ENCODE measurements at regions of chr7 and their contacts with region 1.

Region 1: DNA sequence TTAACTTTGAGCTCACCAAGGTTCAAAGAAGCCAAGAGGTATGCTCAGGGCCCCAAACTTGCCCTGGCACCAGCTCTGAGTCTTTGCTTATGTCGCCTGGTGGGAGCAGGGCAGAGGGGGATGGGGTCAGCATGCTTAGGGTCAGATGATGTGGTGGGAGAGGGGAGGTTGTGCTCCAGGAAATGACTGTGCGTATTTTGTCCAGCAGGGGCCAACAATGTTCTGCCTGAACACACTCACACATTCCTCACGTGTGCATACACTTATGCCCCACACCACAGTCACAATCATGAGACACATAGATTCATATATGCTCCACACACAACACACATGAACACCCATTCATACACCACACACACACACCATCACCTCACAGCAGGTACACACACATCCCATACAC is 4.4 kb upstream of the RAMP3 start:
- DNase-seq: no peak
- ATAC-seq: no peak
- H3K4me3 ChIP-seq: no peak overlapping the region
- H3K27ac ChIP-seq: no peak overlapping the region
- H3K4me1 ChIP-seq: peaks cover 0 to 3% of the 10 kb centered on the region in 2 donors
- H3K27me3 ChIP-seq: peaks cover 1 to 12% (median 7%) of the 10 kb centered on the region in 3 donors
- CTCF ChIP-seq: no peak
- POLR2A ChIP-seq: no peak

Region 2: GRCh38 chr7:45052011-45052410 is 101.2 kb before region 1 on chr7:
- in situ Hi-C with region 1: no loop called
- intact Hi-C with region 1: no loop called
- DNase-seq: no peak
- ATAC-seq: no peak
- H3K4me3 ChIP-seq: no peak overlapping the region
- H3K27ac ChIP-seq: no peak overlapping the region
- H3K4me1 ChIP-seq: no peaks in the 10 kb centered on the region
- H3K27me3 ChIP-seq: no peaks in the 10 kb centered on the region
- CTCF ChIP-seq: no peak
- POLR2A ChIP-seq: no peak

Region 3: DNA sequence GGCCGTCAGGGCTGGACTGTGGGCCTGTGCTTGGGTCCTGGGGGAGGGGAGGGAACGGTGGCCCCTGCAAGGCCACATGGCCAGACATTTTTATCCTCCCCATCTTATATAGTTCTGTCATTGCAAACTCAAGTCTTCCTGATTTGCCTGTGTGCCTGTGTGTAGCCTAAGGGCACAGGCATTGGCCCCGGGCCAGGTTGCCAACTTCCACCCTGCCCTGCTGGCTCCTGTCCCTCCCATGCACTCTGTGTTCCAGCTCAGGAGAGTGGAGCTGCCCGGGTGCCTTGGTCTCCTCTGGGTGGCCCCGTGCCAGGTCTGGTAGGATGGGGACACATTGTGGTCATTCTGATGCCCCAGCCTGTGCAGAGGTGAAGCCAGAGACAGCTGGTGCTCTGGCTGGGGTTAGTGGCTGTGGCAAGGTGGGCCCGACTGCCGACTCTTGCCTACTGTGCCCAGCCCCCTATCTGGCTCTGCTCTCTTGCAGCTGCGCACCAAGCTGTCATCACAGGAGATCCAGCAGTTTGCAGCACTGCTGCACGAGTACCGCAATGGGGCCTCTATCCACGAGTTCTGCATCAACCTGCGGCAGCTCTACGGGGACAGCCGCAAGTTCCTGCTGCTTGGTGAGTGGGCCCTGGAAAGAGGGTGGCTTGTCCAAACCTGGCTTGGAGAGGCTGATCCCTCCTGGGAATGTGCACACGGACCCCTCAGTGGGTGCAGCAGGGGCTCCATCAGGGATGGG is 79.3 kb before region 1 on chr7:
- in situ Hi-C with region 1: no loop called
- intact Hi-C with region 1: no loop called
- DNase-seq: no peak
- ATAC-seq: no peak
- H3K4me3 ChIP-seq: no peak overlapping the region
- H3K27ac ChIP-seq: no peak overlapping the region
- H3K4me1 ChIP-seq: no peaks in the 10 kb centered on the region
- H3K27me3 ChIP-seq: no peaks in the 10 kb centered on the region
- CTCF ChIP-seq: no peak
- POLR2A ChIP-seq: no peak

Region 4: GRCh38 chr7:45259966-45260646 is 106.9 kb after region 1 on chr7:
- in situ Hi-C with region 1: loop called in 2 of 4 experiments (anchors 5 to 10 kb)
- intact Hi-C with region 1: loop called (anchors 1 kb)
- DNase-seq: peak in 1 of 2 donors; percentile 23
- ATAC-seq: peak; percentile 36 to 56
- H3K4me3 ChIP-seq: no peak overlapping the region
- H3K27ac ChIP-seq: no peak overlapping the region
- H3K4me1 ChIP-seq: no peaks in the 10 kb centered on the region
- H3K27me3 ChIP-seq: no peaks in the 10 kb centered on the region
- CTCF ChIP-seq: peak; percentile 70 to 94 (median 87)
- POLR2A ChIP-seq: no peak

Region 5: DNA sequence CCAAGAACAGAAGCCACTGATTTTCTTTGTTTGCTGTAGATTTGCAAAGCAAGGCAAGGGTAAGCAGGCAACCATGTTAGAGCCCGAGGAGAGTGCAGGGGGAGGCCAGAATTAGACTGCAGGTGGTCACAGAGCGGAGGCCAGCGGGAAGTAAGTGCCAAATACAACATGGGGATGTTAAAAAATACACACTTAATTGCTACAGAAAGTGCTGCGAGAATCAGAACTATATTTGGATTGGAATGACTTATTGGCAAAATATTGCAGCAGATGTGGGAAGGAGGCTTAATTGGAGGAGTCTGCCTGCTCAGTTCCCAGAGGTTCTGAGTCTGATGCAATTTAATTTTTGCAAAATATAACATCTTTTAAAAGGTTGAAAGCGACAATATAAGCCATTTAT is 371.2 kb after region 1 on chr7:
- in situ Hi-C with region 1: no loop called
- intact Hi-C with region 1: no loop called
- DNase-seq: no peak
- ATAC-seq: peak in 1 of 2 donors; percentile 65
- H3K4me3 ChIP-seq: no peak overlapping the region
- H3K27ac ChIP-seq: no peak overlapping the region
- H3K4me1 ChIP-seq: no peaks in the 10 kb centered on the region
- H3K27me3 ChIP-seq: no peaks in the 10 kb centered on the region
- CTCF ChIP-seq: no peak
- POLR2A ChIP-seq: no peak

Measured in gastrocnemius medialis (tissue), 4 donors.